ENCODE measurements at regions of chr15 and their contacts with region 1.

Region 1: DNA sequence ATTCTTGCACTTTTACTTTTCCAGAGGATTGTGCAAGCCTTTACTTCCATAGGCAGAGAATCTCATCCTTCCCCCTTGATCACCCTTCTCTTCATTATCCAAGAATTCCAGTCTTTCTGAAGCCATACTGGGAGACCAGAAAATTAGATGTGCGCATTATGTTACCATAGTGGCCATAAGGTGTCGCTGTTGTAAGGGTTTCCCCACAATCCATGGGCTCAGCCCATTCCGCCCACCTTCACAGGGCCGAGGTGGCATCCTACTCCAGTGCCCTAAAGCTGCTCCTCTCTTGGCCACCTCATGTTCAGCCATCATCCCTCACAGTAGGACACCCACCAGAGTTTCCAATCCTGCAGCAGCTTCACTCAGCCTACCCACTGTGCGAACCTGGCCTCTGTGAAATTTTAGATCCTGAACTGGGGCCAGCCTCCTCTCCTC is 35.0 kb downstream of the CTSH start:
- DNase-seq: peak in 1 of 2 experiments; percentile 79
- H3K4me3 ChIP-seq: no peak overlapping the region
- H3K27ac ChIP-seq: no peak overlapping the region
- H3K4me1 ChIP-seq: peaks cover 0 to 3% (median 1%) of the 10 kb centered on the region in 4 experiments; a peak in 3 of 7 replicates
- H3K27me3 ChIP-seq: no peaks in the 10 kb centered on the region
- CTCF ChIP-seq: peak; percentile 59 to 93 (median 86)
- EP300 ChIP-seq: no peak
- POLR2A ChIP-seq: no peak
- RAD21 ChIP-seq: peak; percentile 89 to 90

Region 2: DNA sequence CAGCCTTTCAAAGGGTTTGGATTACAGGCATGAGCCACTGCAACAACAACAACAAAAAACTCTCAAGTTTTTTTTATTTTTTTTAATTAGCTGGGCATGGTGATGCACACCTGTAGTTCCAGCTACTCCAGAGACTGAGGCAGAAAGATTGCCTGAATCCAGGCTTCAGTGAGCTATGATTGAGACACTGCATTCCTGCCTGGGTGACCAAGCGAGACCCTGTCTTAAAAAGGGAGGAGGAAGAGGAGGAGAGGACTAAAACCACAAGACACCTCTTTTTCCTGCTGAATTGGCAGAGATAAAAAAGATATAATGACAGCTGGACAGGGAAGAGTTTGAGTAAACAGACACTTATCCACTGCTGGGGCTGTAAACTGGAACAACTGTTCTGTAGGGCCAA is 246.1 kb before region 1 on chr15:
- CTCF ChIA-PET with region 1: no interaction called
- POLR2A ChIA-PET with region 1: no interaction called
- DNase-seq: no peak
- H3K4me3 ChIP-seq: no peak overlapping the region
- H3K27ac ChIP-seq: no peak overlapping the region
- H3K4me1 ChIP-seq: no peaks in the 10 kb centered on the region
- H3K27me3 ChIP-seq: no peaks in the 10 kb centered on the region; a peak in 1 of 7 replicates
- CTCF ChIP-seq: no peak
- EP300 ChIP-seq: no peak
- POLR2A ChIP-seq: no peak
- RAD21 ChIP-seq: no peak

Region 3: GRCh38 chr15:78685159-78685921 is 224.5 kb before region 1 on chr15:
- CTCF ChIA-PET with region 1: no interaction called
- POLR2A ChIA-PET with region 1: no interaction called
- DNase-seq: peak in 1 of 2 experiments; percentile 50
- H3K4me3 ChIP-seq: no peak overlapping the region
- H3K27ac ChIP-seq: no peak overlapping the region
- H3K4me1 ChIP-seq: peaks cover 9 to 18% (median 16%) of the 10 kb centered on the region in 4 experiments
- H3K27me3 ChIP-seq: no peaks in the 10 kb centered on the region
- CTCF ChIP-seq: no peak
- EP300 ChIP-seq: no peak
- POLR2A ChIP-seq: no peak
- RAD21 ChIP-seq: no peak

Region 4: DNA sequence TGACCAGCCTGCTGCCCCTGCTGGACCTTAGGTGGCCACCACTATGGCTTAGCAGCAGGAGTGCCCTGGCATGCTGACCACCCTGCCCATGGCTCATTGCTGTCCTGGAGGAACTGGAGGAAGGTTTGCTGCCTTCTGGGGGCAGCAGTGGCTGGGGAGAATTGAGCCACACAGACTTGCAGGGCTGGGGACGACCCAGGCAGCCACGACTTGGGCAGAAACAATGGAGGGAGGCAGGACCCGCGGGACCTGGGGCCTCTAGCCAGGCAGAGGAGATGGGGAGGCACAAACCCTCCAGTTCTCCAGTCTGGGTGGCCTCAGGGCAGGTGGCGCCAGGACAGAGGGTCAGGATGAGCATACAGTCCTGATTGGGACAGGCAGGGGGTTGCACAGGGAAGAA is 131.4 kb before region 1 on chr15:
- CTCF ChIA-PET with region 1: no interaction called
- POLR2A ChIA-PET with region 1: no interaction called
- DNase-seq: no peak
- H3K4me3 ChIP-seq: no peak overlapping the region
- H3K27ac ChIP-seq: no peak overlapping the region
- H3K4me1 ChIP-seq: no peaks in the 10 kb centered on the region; a peak in 1 of 7 replicates
- H3K27me3 ChIP-seq: no peaks in the 10 kb centered on the region
- CTCF ChIP-seq: no peak
- EP300 ChIP-seq: no peak
- POLR2A ChIP-seq: no peak
- RAD21 ChIP-seq: no peak

Region 5: DNA sequence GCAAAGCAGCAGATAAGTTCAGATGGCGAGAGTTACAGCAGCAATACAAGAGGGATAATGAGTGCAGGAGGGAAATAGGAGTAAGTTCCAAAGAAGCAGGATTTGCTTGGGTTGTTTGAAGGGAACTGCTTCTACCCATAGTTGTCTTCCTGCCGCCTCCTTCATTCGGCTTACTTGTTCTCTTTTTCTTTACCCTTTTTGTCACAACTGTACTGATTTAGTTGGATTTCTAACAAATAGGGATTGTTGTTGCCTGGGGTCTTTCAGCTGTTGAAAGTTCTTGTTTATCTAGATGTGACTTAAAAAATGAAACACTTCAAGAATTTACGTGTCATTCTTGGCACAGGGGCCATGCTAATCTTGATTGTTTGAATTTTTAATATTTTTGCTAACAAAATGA is 11.3 kb before region 1 on chr15:
- CTCF ChIA-PET with region 1: interaction called, 34 read pairs
- POLR2A ChIA-PET with region 1: interaction called, 6 read pairs
- DNase-seq: no peak
- H3K4me3 ChIP-seq: no peak overlapping the region
- H3K27ac ChIP-seq: no peak overlapping the region
- H3K4me1 ChIP-seq: no peaks in the 10 kb centered on the region
- H3K27me3 ChIP-seq: no peaks in the 10 kb centered on the region
- CTCF ChIP-seq: no peak
- EP300 ChIP-seq: no peak
- POLR2A ChIP-seq: peak in 1 of 2 experiments; percentile 53; a peak in 1 of 3 replicates
- RAD21 ChIP-seq: no peak

Region 6: DNA sequence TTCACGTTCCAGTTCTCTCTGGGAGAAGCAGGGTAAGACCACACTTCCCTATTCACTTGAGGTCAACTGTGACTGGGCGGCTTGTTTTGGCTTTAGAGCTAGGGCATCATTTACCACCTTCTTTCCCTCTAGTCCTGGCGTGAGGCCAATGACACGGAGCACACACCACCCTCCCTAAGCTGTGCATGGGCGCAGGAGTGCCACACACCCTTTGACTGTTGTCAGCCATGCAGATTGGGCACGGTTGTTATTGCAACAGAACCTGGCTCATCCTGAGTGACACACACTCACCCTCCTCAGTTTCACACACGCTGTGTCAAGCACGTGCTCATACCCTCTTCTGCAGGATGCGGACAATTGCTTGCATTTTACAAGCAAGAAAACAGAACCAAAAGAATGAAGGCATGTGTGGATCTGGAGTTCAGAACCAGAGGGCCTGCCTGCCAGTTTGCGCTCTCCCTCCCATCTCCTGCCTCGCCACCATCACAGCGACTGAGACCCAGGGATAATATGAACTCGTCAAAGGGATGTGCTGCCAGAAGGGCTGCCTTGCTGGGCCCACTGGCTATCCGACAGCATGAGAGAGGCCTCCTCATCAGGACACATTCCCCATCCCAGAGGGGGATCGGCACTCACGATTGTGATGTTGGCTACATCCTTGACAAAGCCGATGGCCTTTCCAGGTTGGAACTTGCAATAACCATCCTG is 17.4 kb after region 1 on chr15:
- CTCF ChIA-PET with region 1: interaction called, 41 read pairs
- POLR2A ChIA-PET with region 1: interaction called, 3 read pairs
- DNase-seq: no peak
- H3K4me3 ChIP-seq: no peak overlapping the region
- H3K27ac ChIP-seq: no peak overlapping the region
- H3K4me1 ChIP-seq: no peaks in the 10 kb centered on the region
- H3K27me3 ChIP-seq: no peaks in the 10 kb centered on the region; a peak in 1 of 7 replicates
- CTCF ChIP-seq: no peak
- EP300 ChIP-seq: no peak
- POLR2A ChIP-seq: no peak
- RAD21 ChIP-seq: no peak

Region 7: DNA sequence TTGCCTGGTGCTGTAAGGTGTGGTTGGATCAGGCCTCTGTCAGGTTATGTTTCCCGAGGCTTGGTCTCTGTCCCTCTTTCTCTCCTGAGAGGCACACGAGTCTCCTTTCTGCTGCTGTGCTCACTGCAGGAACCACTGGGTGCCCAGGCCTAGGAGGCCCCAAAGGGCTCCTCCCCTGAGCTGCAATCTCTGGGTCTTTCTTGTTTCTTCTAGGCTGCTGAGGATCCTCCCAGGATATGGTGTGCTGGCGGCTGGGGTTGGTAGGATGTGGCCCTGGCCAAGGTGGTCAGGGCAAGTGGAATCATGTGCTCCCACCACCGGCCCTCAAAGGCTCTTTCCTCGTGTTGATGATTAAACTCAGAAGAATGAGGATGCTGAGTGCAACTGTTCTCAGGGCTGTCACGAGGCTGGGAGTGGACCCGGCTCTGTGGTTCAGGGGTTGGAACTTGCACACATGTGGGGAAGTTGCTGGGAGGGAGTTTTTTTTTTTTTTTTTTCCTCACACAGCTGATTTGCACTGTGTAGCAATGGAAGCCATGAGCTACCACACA is 78.6 kb after region 1 on chr15:
- CTCF ChIA-PET with region 1: interaction called, 23 read pairs
- POLR2A ChIA-PET with region 1: no interaction called
- DNase-seq: no peak
- H3K4me3 ChIP-seq: no peak overlapping the region
- H3K27ac ChIP-seq: no peak overlapping the region
- H3K4me1 ChIP-seq: peaks cover 0 to 5% (median 0%) of the 10 kb centered on the region in 4 experiments; a peak in 3 of 7 replicates
- H3K27me3 ChIP-seq: no peaks in the 10 kb centered on the region; a peak in 2 of 7 replicates
- CTCF ChIP-seq: no peak
- EP300 ChIP-seq: no peak
- POLR2A ChIP-seq: no peak
- RAD21 ChIP-seq: no peak

Region 8: GRCh38 chr15:79004336-79004735 is 94.5 kb after region 1 on chr15:
- CTCF ChIA-PET with region 1: interaction called, 171 read pairs
- POLR2A ChIA-PET with region 1: interaction called, 3 read pairs
- DNase-seq: no peak
- H3K4me3 ChIP-seq: no peak overlapping the region
- H3K27ac ChIP-seq: no peak overlapping the region
- H3K4me1 ChIP-seq: peaks cover 0 to 10% (median under 1%) of the 10 kb centered on the region in 4 experiments; a peak in 4 of 7 replicates
- H3K27me3 ChIP-seq: no peaks in the 10 kb centered on the region; a peak in 2 of 7 replicates
- CTCF ChIP-seq: no peak
- EP300 ChIP-seq: no peak
- POLR2A ChIP-seq: no peak
- RAD21 ChIP-seq: no peak

Measured in H1 (cell line).